K562 (cell line): ENCODE measurements at regions of chr18 and their contacts with region 1.

Region 1: GRCh38 chr18:62450546-62451406 is 72.0 kb upstream of the ZCCHC2 start:
- DNase-seq: peak; percentile 62 to 84 (median 72)
- ATAC-seq: peak; percentile 88
- H3K4me3 ChIP-seq: no peak overlapping the region
- H3K27ac ChIP-seq: peak overlapping the region; percentile 68
- H3K4me1 ChIP-seq: peaks cover 7 to 25% of the 10 kb centered on the region in 2 experiments; a peak in 4 of 5 replicates
- H3K27me3 ChIP-seq: no peaks in the 10 kb centered on the region
- CTCF ChIP-seq: no peak
- EP300 ChIP-seq: peak; percentile 90
- POLR2A ChIP-seq: no peak
- RAD21 ChIP-seq: no peak

Region 2: DNA sequence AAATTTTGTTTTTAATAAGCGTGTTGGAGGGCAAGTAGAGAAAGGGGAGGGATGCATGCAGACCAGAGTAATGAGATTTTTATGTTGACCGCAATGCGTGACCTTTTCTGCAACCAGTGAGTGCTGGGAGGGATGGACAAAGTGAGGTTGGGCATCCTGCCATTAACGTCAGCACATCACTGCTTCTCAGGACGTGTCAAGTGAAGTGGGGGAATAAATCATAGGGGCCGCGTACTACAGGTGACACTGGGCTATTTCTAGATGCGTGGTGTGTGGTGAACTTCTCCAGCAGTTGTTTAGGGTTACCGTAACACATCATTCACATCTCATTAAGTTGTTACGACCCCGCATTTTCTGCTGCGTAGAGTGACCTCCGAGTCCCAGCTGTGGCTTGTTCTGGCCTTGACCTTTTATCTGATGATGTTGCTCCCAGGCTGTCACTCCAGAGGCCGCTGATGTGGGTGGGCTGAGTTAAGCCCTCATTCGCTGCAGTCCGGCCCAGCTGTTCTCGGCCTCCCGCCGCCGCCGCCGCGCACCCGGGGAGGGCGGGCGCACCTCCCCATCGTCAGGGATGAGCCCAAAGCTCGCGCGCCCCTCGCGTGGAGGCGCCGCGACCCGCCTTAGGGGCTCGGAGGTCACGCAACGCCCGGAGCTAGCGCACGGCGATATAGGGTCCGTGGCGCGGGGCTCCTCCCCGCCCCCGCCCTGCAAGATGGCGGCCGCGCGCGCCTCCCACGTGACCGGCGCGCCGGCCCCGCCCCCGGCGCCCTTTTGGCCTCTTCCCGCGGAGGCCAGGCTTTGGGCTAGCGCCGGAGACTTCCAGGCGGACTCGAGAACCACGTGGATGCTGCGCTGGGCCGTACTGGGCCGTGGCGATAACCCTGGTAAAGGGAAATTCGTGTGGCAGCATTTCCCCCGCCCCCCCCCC is 75.6 kb after region 1 on chr18:
- CTCF ChIA-PET with region 1: no interaction called
- POLR2A ChIA-PET with region 1: interaction called, 3 read pairs
- in situ Hi-C with region 1: no loop called
- intact Hi-C with region 1: loop called (anchors 5 kb)
- DNase-seq: peak; percentile 74 to 91 (median 77)
- ATAC-seq: peak; percentile 62
- H3K4me3 ChIP-seq: peak overlapping the region; percentile 66
- H3K27ac ChIP-seq: peak overlapping the region; percentile 80
- H3K4me1 ChIP-seq: peaks cover 17 to 29% of the 10 kb centered on the region in 2 experiments; a peak in 4 of 5 replicates
- H3K27me3 ChIP-seq: no peaks in the 10 kb centered on the region
- CTCF ChIP-seq: no peak
- EP300 ChIP-seq: no peak
- POLR2A ChIP-seq: peak; percentile 64; the same call in 1 of the 2 replicates
- RAD21 ChIP-seq: no peak

Region 3: DNA sequence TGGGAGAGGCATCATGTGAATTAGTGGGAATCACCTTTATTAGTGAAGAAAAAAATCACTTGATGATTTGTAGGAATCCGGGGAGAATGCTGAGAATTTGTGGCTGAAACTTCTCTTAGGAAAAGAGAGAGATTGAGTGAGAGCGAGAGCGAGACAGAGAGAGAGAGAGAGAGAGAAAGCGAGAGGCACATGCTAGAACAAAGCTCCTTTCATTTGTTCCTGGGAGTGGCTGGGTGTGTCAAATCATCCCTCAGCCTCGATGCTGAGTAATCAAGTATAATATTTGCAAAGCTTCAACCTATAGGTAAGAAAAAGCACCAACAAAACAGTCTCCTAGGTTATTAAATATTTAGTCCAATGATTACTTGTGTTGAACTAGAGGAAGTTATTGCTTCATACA is 1021.6 kb after region 1 on chr18:
- CTCF ChIA-PET with region 1: no interaction called
- POLR2A ChIA-PET with region 1: no interaction called
- in situ Hi-C with region 1: no loop called
- intact Hi-C with region 1: no loop called
- DNase-seq: no peak
- ATAC-seq: no peak
- H3K4me3 ChIP-seq: no peak overlapping the region
- H3K27ac ChIP-seq: no peak overlapping the region
- H3K4me1 ChIP-seq: peaks cover 2 to 7% of the 10 kb centered on the region in 2 experiments; a peak in 1 of 5 replicates
- H3K27me3 ChIP-seq: no peaks in the 10 kb centered on the region
- CTCF ChIP-seq: no peak
- EP300 ChIP-seq: no peak
- POLR2A ChIP-seq: no peak
- RAD21 ChIP-seq: no peak